B cell (primary cell): ENCODE measurements at regions of chr17 and their contacts with region 1.

Region 1: DNA sequence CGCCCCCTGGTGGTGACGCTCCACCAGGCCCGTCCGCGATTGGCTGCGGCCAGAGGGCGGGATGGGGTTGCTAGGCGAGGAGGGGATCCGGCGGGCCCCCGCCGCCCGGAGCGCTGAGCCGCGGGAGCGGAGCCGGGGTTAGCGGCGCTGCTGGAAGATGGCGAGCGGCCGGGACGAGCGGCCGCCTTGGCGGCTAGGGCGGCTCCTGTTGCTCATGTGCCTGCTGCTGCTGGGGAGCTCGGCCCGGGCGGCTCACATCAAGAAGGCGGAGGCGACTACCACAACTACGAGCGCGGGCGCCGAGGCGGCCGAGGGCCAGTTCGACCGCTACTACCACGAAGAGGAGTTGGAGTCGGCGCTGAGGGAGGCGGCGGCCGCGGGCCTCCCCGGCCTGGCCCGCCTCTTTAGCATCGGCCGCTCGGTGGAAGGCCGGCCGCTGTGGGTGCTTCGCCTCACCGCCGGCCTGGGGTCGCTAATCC is at the start of gene CPD:
- DNase-seq: peak; percentile 96
- ATAC-seq: peak; percentile 97
- H3K4me3 ChIP-seq: peak within 1 kb of the TSS; percentile 62 to 97 (median 77)
- H3K4me3 Mint-ChIP-seq: peak within 1 kb of the TSS; percentile 88
- H3K27ac ChIP-seq: peak within 1 kb of the TSS in 1 of 2 donors; percentile 56
- H3K27ac Mint-ChIP-seq: peak within 1 kb of the TSS; percentile 80
- H3K4me1 ChIP-seq: peaks cover 17 to 19% of the 10 kb centered on the region in 2 donors
- H3K4me1 Mint-ChIP-seq: peaks cover 28% of the 10 kb centered on the region
- H3K27me3 ChIP-seq: peaks cover 0 to 42% (median 41%) of the 10 kb centered on the region in 4 experiments
- H3K27me3 Mint-ChIP-seq: peaks cover 50% of the 10 kb centered on the region
- CTCF ChIP-seq: no peak
- total RNA-seq, gene CPD: 12.5 and 15.6 TPM in 2 replicates

Region 2: DNA sequence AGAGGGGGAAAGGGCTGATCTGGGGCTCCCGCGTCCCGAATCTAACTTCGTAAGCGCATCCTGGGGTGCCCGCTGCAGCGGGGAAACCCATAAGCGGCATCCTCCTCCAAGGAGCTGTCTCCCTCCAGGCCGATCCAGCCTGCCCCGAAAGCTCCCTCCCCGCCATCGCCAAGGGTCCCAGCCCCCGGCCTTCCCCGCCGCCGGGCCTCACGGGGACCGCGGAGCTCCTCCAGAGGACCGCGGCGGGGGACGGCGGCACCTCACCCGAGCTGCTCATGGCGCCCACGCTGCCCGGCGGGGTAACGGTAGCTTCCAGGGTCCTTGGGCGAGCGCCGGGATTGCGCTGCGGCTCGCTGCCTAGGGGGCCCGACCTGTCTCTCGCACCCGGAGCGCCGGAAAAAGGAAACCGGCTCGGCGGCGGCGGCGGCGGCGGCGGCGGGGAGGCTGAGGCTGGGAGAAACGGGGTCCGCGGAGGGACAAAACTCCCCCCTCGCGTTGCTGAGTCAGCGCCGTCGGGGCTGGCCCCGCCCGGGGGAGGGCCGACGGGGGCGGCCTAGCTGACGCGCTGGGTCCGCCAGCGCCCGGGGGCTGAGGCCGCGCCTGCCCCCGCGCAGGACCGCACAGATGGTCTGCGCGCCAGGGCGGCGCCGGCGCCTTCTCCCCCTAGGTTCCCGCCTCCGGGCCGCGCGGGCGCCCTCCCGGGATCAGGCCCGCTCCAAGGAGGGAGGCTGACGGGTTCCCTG is 87.1 kb before region 1 on chr17 and contains the start of gene BLMH:
- CTCF ChIA-PET with region 1: no interaction called
- POLR2A ChIA-PET with region 1: no interaction called
- intact Hi-C with region 1: loop called (anchors 1 kb)
- DNase-seq: peak; percentile 83
- ATAC-seq: peak; percentile 94
- H3K4me3 ChIP-seq: peak within 1 kb of the TSS; percentile 70 to 87 (median 80)
- H3K4me3 Mint-ChIP-seq: peak within 1 kb of the TSS; percentile 96
- H3K27ac ChIP-seq: peak within 1 kb of the TSS in 1 of 2 donors; percentile 47
- H3K27ac Mint-ChIP-seq: peak within 1 kb of the TSS; percentile 78
- H3K4me1 ChIP-seq: peaks cover 12 to 16% of the 10 kb centered on the region in 2 donors
- H3K4me1 Mint-ChIP-seq: peaks cover 10% of the 10 kb centered on the region
- H3K27me3 ChIP-seq: peaks cover 0 to 4% (median 0%) of the 10 kb centered on the region in 4 experiments
- H3K27me3 Mint-ChIP-seq: no peaks in the 10 kb centered on the region
- CTCF ChIP-seq: no peak
- total RNA-seq, gene BLMH: 25.9 and 27.9 TPM in 2 replicates

Region 3: GRCh38 chr17:30824356-30825145 is 445.7 kb after region 1 on chr17 and contains the start of gene CRLF3:
- CTCF ChIA-PET with region 1: no interaction called
- POLR2A ChIA-PET with region 1: no interaction called
- intact Hi-C with region 1: loop called (anchors 10 kb)
- DNase-seq: peak; percentile 93
- ATAC-seq: peak; percentile 96
- H3K4me3 ChIP-seq: peak within 1 kb of the TSS; percentile 87 to 97 (median 95)
- H3K4me3 Mint-ChIP-seq: peak within 1 kb of the TSS; percentile 94
- H3K27ac ChIP-seq: peak within 1 kb of the TSS; percentile 74 to 90
- H3K27ac Mint-ChIP-seq: peak within 1 kb of the TSS; percentile 97
- H3K4me1 ChIP-seq: peaks cover 41 to 44% of the 10 kb centered on the region in 2 donors
- H3K4me1 Mint-ChIP-seq: peaks cover 42% of the 10 kb centered on the region
- H3K27me3 ChIP-seq: no peaks in the 10 kb centered on the region
- H3K27me3 Mint-ChIP-seq: no peaks in the 10 kb centered on the region
- CTCF ChIP-seq: peak; percentile 73
- total RNA-seq, gene CRLF3: 83.2 and 88.3 TPM in 2 replicates